Common myeloid progenitor, CD34-positive (primary cell): ENCODE measurements at regions of chr2 and their contacts with region 1.

Region 1: DNA sequence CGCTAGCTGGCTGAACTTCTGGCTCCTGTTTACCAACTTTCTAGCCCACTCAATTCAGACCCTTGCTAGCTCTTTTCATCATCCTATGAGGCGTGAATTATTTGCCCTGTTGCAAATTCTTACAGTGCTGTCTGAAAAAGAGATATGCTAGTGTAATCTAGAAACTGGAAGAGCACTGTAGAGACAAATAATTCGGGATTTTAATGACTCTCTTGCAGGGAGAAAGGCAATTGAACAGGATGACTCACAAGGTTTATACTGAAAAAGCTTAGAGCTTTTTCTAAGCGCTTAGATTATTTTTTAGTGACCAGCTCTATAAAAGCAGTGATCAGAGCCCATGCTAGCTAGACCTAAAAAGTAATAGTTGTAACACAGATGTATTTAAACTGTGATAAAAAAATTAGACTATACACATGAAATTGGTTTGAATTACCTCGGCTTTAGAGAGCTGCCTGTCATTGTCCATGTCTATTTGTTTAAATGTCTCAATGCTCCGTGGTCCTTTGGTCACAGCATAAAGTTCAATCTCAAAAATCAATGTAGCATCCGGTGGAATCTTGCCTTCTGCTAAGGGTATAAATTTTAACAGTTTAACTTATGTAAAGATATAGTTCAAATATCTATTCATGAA is 9.1 kb downstream of the FKBP7 start:
- DNase-seq: no peak
- H3K4me3 ChIP-seq: no peak overlapping the region
- H3K27ac ChIP-seq: no peak overlapping the region
- H3K4me1 ChIP-seq: no peaks in the 10 kb centered on the region
- H3K27me3 ChIP-seq: no peaks in the 10 kb centered on the region

Region 2: DNA sequence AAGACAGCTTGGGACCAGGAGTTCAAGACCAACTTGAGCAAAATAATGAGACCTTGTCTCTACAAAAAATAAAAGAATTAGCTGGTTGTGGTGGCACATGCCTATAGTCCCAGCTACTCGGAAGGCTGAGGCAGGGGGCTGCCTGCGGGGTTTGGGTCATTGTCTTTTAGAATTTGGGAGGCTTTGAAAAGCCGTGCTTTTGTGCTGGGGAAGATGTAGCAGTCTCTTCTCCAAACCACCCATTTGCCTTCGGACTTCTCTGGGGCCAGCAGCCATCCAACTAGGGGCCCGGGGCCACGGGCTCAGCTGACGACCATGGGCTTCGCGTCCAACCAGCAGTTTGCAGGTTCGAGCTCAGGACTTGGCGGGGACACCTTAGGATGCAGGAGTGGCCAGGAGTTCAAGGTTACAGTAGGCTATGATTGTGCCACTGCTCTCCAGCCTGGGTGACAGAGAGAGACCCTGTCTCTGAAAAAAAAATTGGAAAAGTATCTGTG is 11.9 kb before region 1 on chr2:
- CTCF ChIA-PET with region 1: interaction called, 15 read pairs
- POLR2A ChIA-PET with region 1: no interaction called
- DNase-seq: no peak
- H3K4me3 ChIP-seq: no peak overlapping the region
- H3K27ac ChIP-seq: no peak overlapping the region
- H3K4me1 ChIP-seq: no peaks in the 10 kb centered on the region
- H3K27me3 ChIP-seq: no peaks in the 10 kb centered on the region

Region 3: DNA sequence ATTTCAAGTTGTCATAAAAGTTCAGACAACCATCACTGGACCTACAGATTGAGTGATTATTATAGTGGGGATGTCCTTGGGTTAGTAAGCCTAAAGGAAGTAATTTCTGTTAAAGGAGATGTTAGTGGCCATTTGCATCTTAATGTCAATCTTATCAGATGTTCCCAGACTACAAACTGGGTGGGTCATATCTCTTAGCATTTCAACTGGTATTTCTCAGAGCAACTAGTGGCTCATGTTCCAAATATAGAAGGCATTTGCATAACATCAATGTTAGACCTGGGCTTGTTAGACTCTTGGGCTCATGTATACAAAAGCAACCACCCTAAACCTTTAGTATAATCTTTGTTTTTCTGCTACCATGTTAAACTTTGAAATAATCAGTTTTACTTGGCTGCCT is 28.8 kb after region 1 on chr2:
- CTCF ChIA-PET with region 1: no interaction called
- POLR2A ChIA-PET with region 1: no interaction called
- DNase-seq: no peak
- H3K4me3 ChIP-seq: no peak overlapping the region
- H3K27ac ChIP-seq: no peak overlapping the region
- H3K4me1 ChIP-seq: no peaks in the 10 kb centered on the region
- H3K27me3 ChIP-seq: no peaks in the 10 kb centered on the region

Region 4: DNA sequence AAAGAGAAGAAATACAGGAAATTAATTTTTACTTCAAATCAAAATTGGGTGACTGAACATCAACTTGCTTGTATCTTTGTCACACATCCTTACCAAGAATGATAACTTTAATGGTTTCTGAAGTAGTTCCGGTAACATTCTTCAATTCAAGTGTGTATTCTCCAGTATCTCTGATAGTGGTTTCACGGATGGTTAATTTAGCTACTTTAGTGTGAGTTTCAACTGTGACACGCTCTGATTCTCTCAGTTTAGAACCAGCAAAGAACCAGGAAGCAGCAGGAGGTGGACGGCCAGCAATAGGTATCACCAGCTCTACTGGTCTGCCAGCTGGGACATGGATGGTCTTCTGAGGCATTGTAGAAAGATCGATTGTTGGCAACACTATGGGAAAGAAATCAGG is 73.2 kb after region 1 on chr2:
- CTCF ChIA-PET with region 1: no interaction called
- POLR2A ChIA-PET with region 1: no interaction called
- DNase-seq: no peak
- H3K4me3 ChIP-seq: no peak overlapping the region
- H3K27ac ChIP-seq: no peak overlapping the region
- H3K4me1 ChIP-seq: no peaks in the 10 kb centered on the region
- H3K27me3 ChIP-seq: no peaks in the 10 kb centered on the region